AG04450 (cell line): ENCODE measurements at regions of chr4 and their contacts with region 1.

Region 1: DNA sequence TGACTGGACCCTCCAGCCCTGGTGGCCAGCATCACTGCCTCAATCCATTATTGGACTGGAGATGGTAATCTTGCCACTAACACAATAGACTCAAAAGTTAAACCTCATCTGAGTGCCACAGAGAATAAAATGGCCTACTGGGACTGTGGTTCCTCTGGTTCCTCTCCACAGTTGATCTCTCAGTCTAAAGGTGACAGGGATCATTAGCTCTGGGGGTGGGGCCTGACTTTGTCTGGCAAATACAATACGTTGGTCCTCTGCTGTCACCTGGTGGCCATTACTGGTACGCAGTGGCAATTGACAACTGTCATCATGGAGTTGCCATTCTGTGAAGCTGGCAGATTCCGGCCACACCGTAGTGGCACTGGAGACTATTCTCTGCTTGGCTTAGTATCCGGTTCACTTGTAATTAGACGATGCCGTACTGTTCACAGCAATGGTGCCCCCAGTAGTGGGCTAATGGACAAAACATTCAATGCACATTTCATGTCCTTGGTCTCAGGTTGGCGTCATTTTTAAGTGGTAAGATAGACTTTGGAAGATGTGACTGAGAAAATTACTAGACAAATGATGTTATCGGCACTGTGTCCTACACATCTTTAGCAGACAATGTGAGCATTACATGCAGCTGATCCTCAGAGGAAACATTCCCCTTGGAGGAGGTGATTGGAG is 6.7 kb downstream of the FGFBP2 start:
- DNase-seq: no peak
- H3K4me3 ChIP-seq: no peak overlapping the region
- H3K27ac ChIP-seq: no peak overlapping the region
- H3K27me3 ChIP-seq: peaks cover 9% of the 10 kb centered on the region
- CTCF ChIP-seq: peak; percentile 98

Region 2: DNA sequence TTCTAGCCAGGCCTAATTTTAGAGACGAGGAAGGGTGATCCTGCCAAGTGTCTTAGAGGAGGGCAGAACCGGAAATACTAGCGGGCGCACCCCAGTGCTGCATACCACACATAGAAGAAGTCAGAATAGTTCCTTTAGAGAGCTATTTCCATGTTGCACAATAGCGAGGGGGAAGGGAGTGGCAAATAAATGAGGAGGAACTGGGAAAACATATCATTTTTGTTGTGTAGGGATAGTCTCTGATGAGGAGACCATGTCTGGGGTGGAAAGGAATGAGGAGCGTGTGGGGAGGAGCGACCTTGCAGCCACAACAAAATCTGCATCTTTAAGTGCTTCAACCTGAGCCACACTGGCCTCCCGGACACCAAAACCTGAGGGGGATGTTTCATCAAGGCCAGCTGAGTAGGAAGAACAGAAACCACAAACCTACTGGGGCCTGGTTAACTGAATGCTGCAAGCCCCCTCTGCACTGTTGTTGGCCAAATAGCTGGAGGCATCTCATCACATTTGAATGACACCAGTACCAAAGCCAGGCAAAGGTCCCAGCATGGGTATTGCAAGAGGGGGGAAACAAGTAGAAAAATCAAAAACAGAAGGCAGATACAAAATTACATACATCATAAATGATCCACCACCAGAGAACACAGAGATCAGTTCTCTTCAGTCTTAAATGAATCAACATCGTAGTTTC is 555.2 kb before region 1 on chr4:
- CTCF ChIA-PET with region 1: no interaction called
- POLR2A ChIA-PET with region 1: no interaction called
- DNase-seq: peak; percentile 32
- H3K4me3 ChIP-seq: no peak overlapping the region
- H3K27ac ChIP-seq: peak overlapping the region; percentile 25
- H3K27me3 ChIP-seq: no peaks in the 10 kb centered on the region
- CTCF ChIP-seq: no peak

Region 3: GRCh38 chr4:15920723-15921591 is 35.4 kb before region 1 on chr4:
- CTCF ChIA-PET with region 1: interaction called, 10 read pairs
- POLR2A ChIA-PET with region 1: no interaction called
- DNase-seq: peak; percentile 95
- H3K4me3 ChIP-seq: no peak overlapping the region
- H3K27ac ChIP-seq: peak overlapping the region; percentile 84
- H3K27me3 ChIP-seq: no peaks in the 10 kb centered on the region
- CTCF ChIP-seq: no peak

Region 4: GRCh38 chr4:15945516-15945915 is 10.8 kb before region 1 on chr4:
- CTCF ChIA-PET with region 1: no interaction called
- POLR2A ChIA-PET with region 1: no interaction called
- DNase-seq: no peak
- H3K4me3 ChIP-seq: no peak overlapping the region
- H3K27ac ChIP-seq: no peak overlapping the region
- H3K27me3 ChIP-seq: peaks cover 11% of the 10 kb centered on the region
- CTCF ChIP-seq: no peak

Region 5: DNA sequence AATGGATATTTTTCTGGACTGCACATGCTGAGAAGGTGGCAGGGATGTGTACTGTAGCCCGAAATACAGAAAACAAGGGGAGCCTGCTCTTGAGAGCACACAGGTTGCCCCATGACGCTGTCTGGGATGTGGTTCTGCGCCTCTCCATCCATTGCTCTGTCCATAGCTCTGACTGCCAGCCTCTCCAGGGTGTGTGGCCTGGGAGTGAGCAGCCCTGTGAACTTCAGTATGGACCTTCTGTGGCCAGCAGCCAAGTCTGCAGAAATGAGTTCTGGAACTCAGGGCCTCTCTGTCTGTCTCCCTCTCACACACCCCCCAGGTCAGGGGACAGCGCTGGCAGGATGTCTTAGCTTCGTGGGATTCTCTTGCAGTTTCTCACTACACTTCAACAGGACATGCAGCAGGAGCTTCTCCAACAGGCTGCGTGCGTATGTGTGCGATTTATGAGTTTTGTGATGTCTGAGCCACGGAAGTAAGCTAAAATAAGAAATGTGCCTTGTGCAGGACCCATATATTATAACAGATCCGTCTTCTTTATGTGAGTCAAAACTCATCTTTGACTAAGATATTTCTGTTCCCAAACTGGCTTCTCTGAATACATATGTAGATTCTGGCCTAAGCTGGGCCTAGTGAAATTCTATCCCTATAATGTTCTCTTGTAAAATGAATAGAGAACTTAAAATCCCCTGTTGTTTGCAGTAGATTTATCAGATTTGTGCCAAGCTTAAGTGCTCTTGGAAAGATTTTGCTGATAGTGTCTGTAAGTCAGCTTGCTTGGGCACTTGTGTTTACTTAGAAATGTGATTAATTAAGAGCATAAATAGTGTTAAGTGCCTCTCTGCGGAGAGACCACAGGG is 87.6 kb after region 1 on chr4:
- CTCF ChIA-PET with region 1: no interaction called
- POLR2A ChIA-PET with region 1: no interaction called
- DNase-seq: no peak
- H3K4me3 ChIP-seq: no peak overlapping the region
- H3K27ac ChIP-seq: no peak overlapping the region
- H3K27me3 ChIP-seq: peaks cover 17% of the 10 kb centered on the region
- CTCF ChIP-seq: no peak

Region 6: DNA sequence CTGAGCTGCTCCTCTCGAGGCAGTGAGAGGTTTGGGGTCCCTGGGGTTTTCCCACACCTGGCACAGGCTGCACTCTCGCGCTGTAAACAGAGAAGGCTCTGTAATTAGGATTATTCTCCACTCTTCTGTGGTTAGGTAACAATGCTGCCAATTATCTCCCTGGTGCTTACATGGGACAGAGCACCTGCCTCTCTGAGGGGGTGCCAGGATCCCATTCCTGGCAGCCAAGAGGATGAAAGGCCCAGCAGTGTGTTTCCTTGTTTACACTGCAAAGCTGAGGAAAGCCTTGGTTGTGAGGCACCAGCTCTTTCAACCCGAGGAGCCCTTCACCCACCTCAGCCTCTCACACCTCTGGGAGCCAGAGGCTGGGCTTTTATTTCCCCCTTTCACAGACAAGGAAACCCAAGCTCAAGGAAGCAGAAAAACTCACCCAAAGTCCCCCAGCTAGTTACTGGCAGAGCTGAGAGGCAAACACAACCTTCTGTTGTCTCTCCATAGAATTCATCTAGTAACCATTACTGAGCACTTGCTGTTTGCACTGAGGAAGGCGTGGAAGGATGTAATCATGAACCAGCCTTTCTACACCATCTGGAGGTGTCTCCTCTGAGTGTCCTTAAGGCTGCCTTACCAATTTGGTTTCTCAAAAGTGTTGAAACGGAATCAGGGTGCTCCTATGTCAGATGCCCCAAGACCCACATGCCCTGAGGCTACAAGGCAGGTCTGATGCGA is 167.2 kb after region 1 on chr4:
- CTCF ChIA-PET with region 1: no interaction called
- POLR2A ChIA-PET with region 1: no interaction called
- DNase-seq: no peak
- H3K4me3 ChIP-seq: no peak overlapping the region
- H3K27ac ChIP-seq: no peak overlapping the region
- H3K27me3 ChIP-seq: peaks cover 25% of the 10 kb centered on the region
- CTCF ChIP-seq: no peak